Activated B cell treated with CpG ODN at 0.5 μM for 24 hours (primary cell): ENCODE measurements at regions of chr6 and their contacts with region 1.

Region 1: GRCh38 chr6:46221222-46221793 is 50.5 kb upstream of the ENPP5 start:
- DNase-seq: no peak
- ATAC-seq: peak; percentile 48
- H3K4me3 Mint-ChIP-seq: peak overlapping the region; percentile 73
- H3K27ac Mint-ChIP-seq: peak overlapping the region; percentile 93
- H3K4me1 Mint-ChIP-seq: peaks cover 59% of the 10 kb centered on the region
- H3K27me3 Mint-ChIP-seq: no peaks in the 10 kb centered on the region
- CTCF ChIP-seq: no peak

Region 2: DNA sequence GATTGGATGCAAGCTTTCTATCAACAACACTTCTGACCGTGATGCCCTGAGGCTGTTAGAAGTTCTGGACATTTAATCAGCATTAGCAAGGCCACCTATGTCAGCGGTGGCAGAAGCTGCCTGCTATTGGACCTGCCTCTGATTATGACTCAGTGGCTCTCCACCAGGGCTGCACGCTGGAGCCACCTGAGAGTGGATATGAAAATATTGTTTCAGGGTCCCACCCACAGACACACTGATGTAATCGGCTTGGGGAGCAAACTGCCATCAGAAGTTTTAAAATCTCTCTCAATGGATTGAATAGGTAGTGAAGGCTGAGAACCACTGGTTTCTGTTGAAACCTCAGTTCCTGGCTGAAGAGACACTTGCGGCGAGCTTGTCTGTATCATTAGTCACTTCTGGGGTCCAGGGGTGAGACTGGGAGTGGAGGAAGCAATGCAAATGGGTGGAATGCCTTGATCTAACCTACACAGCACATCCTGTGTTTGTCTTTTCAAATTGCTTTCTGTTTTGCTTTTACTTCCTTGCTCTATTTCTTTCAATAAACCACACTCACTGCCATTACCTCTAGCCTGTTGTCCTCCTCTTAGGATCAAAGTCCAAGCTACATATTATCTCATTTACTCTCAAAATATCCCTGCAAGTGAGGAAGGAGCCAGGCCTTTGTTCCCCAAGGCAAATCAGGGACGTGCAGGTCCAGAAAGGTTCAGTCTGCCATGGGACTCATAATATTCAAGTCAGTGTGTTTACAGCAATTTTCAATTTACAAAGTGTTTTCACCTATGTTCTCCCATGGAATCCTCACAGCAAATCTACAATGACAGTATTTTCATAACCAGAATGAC is 209.8 kb before region 1 on chr6:
- CTCF ChIA-PET with region 1: interaction called, 4 read pairs
- POLR2A ChIA-PET with region 1: no interaction called
- intact Hi-C with region 1: loop called (anchors 5 kb)
- DNase-seq: no peak
- ATAC-seq: peak; percentile 76
- H3K4me3 Mint-ChIP-seq: peak overlapping the region; percentile 64
- H3K27ac Mint-ChIP-seq: peak overlapping the region; percentile 82
- H3K4me1 Mint-ChIP-seq: peaks cover 44% of the 10 kb centered on the region
- H3K27me3 Mint-ChIP-seq: peaks cover 1% of the 10 kb centered on the region
- CTCF ChIP-seq: no peak

Region 3: DNA sequence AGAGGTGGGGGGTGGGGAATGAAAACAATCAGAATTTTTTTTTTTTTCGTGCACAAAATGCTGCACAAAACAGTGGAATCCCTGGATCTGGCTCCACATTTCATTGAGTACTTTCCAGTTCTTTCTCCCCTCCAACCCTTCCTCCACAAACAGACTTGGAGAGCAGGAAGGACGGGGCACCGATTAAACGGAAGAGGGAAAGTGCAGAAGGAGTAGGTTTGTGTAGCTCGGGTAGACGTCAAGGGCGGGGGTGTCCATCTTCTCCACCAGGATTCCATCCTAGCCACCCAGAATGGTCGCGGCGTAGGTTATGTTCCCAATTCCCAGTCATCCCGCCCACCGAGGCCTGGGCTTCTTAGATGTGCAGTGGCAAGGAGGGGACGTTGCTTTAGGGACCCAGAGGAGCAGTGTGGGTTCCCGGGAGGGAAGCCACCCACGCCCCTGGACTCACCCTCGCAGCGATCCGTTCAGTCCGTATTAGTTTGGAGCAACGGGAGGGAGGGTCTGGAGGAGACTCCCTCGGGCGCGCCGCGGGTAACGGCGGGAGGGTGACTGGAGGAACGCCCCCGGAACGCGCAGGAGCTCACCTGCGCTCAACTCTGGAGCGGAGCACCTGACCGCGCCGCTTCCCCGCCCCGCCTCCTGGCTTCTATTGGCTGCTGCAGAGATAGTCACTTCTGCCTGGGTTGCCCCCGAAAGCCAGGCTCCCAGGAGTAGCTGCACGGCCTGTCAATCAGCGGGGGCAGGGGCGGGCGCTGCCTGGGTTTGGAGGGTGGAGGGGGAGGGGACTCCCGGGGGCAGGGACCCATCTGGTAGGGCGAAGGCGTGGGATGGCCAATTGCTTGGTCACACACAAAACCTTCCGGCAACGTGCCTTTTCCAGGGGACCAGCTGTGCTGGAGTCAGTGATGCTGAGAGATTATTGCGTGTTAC is 50.7 kb before region 1 on chr6 and contains the start of gene ENPP5:
- CTCF ChIA-PET with region 1: interaction called, 4 read pairs
- POLR2A ChIA-PET with region 1: no interaction called
- intact Hi-C with region 1: loop called (anchors 1 kb)
- DNase-seq: peak; percentile 58
- ATAC-seq: peak; percentile 98
- H3K4me3 Mint-ChIP-seq: peak within 1 kb of the TSS; percentile 81
- H3K27ac Mint-ChIP-seq: no peak within 1 kb of the TSS
- H3K4me1 Mint-ChIP-seq: peaks cover 10% of the 10 kb centered on the region
- H3K27me3 Mint-ChIP-seq: peaks cover 2% of the 10 kb centered on the region
- CTCF ChIP-seq: no peak
- total RNA-seq, gene ENPP5: 0.44 and 0.71 TPM in 2 replicates

Region 4: DNA sequence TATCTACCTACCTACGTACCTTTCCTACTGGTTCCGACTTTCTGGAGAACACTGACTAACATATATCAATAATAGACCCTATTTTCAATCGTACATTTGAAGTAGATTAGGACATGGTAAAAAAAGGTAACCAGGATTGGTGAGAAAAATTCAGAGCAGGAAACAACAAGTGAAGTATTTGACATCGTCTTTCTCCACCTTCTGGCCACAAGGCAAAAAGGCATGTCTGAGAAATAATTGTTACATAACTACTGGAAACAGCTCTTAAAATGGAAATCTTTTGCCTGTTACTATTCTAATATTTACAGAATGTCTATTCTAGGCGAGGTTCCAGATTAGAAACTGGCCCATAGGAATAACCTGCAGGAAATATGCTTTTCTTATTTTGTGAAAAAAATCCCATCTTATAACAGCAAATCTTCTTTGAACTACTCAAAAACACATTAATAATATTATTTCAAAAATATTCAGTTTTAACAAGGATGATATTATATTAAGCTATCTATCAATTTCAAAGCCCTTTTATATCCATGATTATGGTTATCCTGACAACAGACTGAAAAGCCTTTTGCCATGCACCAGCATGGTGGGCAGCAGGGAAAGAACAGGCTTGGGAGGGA is 189.1 kb after region 1 on chr6:
- CTCF ChIA-PET with region 1: interaction called, 226 read pairs
- POLR2A ChIA-PET with region 1: interaction called, 4 read pairs
- intact Hi-C with region 1: loop called (anchors 1 kb)
- DNase-seq: no peak
- ATAC-seq: peak; percentile 47
- H3K4me3 Mint-ChIP-seq: no peak overlapping the region
- H3K27ac Mint-ChIP-seq: no peak overlapping the region
- H3K4me1 Mint-ChIP-seq: no peaks in the 10 kb centered on the region
- H3K27me3 Mint-ChIP-seq: no peaks in the 10 kb centered on the region
- CTCF ChIP-seq: peak; percentile 44

Region 5: GRCh38 chr6:46781478-46782378 is 560.4 kb after region 1 on chr6:
- CTCF ChIA-PET with region 1: no interaction called
- POLR2A ChIA-PET with region 1: no interaction called
- intact Hi-C with region 1: loop called (anchors 2 kb)
- DNase-seq: no peak
- ATAC-seq: no peak
- H3K4me3 Mint-ChIP-seq: no peak overlapping the region
- H3K27ac Mint-ChIP-seq: no peak overlapping the region
- H3K4me1 Mint-ChIP-seq: no peaks in the 10 kb centered on the region
- H3K27me3 Mint-ChIP-seq: no peaks in the 10 kb centered on the region
- CTCF ChIP-seq: no peak